ENCODE measurements at regions of chr14 and their contacts with region 1.

Region 1: DNA sequence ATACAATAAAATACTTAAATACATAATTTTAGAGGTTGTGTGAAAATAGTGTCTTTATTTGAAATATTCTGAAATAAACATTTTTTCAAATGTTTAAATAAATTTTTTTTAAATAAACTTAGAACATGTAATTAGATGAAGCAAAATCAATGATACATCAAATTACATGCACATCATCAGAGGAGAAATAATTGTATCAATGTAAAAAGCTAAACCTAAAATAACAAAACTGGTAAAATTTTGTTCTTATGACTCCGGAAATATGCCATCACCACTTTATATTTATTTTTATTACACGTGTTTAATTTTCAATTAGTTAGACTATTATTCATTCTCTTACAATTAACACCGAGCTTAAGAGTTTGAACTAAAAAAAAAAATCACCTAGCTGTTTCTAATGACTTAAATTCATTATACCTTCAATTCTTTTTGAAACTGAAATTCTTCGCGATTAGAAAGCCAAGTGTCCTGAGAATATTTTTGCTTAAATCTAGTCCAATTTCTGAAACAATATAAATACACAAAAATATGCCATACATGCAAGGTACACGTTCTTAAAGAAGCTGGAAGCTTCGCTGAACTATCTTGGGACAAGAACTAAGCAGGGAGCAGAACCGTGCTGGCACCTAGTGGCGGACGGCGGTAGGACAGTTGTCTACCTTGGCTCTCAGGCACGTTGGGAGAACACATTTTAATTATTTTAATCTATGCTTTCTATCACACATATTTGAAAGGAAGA is 230.5 kb downstream of the SLC25A21 start:
- DNase-seq: peak; percentile 78

Region 2: DNA sequence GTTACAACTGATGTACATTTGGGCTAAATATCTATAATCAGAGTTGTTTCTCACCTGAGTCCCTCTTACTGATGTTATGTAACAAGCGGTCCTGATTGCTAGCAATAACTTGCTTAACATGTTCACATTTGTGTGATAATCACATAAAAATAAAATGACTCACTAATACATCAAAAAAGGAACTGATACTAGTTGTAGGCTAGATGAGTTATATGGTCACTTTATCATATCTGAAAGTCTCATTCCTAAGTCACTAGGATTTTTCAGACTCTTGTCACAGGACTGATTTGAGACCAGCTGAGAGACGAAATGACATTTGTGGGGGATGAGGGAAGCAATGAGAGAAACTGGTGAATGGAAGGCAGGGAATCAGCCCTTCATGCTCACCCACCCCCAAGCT is 456.2 kb before region 1 on chr14:
- intact Hi-C with region 1: no loop called
- DNase-seq: no peak

Region 3: DNA sequence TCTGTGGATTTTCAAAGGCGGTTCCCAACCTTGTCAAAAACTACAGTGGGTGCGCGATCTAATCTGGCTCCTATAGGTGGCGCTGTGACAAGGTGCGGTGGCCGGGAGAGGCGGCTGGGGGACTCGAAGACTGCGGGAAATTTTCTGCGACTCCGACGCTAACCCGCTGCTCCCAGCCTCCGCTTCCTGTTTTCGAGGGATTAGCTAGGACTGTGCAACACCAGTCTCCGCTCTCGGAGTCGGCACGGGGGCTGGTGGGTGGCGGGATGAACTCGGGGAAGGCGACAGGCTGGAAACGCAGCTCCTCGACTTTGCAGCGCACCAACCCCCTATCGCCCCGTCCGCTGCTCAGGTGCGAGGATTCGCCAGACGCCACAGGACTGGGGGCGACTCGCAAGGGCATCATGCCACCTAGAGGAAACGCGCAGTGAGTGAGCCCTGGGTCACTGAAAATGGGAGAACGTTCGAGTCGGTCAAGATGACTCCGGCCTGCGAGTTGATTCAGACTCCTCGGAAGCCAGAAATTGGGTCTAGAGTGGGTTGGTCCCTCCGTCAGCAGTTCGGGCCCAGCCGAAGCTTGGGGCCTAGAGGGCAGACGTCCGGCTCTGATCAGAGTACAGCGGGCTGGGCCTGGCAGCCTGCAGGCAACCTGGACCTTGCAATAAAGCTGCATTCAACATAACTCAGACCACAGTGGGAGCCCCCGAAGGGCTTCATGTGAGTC is 285.8 kb before region 1 on chr14:
- intact Hi-C with region 1: loop called (anchors 10 kb)
- DNase-seq: no peak